Vagina (tissue), 2 donors: ENCODE measurements at regions of chr3 and their contacts with region 1.

Region 1: GRCh38 chr3:36729204-36730056 is 34.9 kb downstream of the DCLK3 start:
- DNase-seq: no peak
- H3K4me3 ChIP-seq: no peak overlapping the region
- H3K27ac ChIP-seq: no peak overlapping the region
- H3K4me1 ChIP-seq: no peaks in the 10 kb centered on the region
- H3K27me3 ChIP-seq: no peaks in the 10 kb centered on the region
- CTCF ChIP-seq: peak in 2 of 3 experiments; percentile 65 to 71
- POLR2A ChIP-seq: no peak

Region 2: DNA sequence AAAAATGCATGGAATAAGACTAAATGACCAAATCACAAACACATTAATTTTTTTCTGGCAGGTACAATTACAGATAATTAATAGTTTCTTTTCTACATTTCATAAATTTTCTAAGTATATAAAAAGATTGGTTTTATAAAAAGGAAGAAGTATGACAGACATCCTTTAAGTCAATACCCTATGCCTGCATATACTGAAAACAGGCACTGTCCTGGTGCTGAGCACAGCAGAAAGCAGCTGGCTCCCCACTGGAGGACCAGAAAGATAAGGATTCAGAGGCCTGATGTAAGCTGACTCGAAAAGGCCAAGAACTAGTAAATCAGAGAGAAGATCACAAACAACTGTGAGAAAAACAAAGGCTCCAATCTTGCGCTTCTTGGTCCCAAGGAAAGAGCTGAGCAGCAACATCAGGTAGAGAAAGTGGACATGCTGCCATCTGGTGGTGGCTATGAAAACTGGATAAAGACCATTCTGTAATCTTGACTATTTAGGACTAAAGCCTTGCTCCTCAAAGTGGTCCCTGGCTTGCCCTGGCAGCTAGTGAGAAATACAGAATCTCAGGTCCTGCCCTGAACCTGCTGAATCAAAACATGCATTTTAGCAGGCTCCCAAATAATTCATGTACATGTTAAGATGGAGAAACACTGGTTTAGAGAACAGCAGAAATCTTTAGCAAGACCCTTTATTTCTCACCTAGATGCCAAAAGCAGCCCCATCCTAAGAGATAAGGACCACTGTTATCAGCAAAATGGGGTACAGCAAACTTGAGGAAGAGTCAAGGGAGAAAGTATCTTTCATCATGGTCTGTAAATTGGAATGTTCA is 139.4 kb after region 1 on chr3:
- intact Hi-C with region 1: loop called (anchors 10 kb)
- DNase-seq: no peak
- H3K4me3 ChIP-seq: no peak overlapping the region
- H3K27ac ChIP-seq: no peak overlapping the region
- H3K4me1 ChIP-seq: no peaks in the 10 kb centered on the region
- H3K27me3 ChIP-seq: no peaks in the 10 kb centered on the region
- CTCF ChIP-seq: peak; percentile 54 to 73 (median 59)
- POLR2A ChIP-seq: no peak

Region 3: GRCh38 chr3:36957862-36958686 is 228.6 kb after region 1 on chr3:
- intact Hi-C with region 1: loop called (anchors 10 kb)
- DNase-seq: no peak
- H3K4me3 ChIP-seq: no peak overlapping the region
- H3K27ac ChIP-seq: no peak overlapping the region
- H3K4me1 ChIP-seq: no peaks in the 10 kb centered on the region
- H3K27me3 ChIP-seq: no peaks in the 10 kb centered on the region
- CTCF ChIP-seq: no peak
- POLR2A ChIP-seq: no peak

Region 4: GRCh38 chr3:37417297-37418082 is 688.1 kb after region 1 on chr3:
- intact Hi-C with region 1: no loop called
- DNase-seq: no peak
- H3K4me3 ChIP-seq: no peak overlapping the region
- H3K27ac ChIP-seq: no peak overlapping the region
- H3K4me1 ChIP-seq: no peaks in the 10 kb centered on the region
- H3K27me3 ChIP-seq: no peaks in the 10 kb centered on the region
- CTCF ChIP-seq: no peak
- POLR2A ChIP-seq: no peak